ENCODE measurements at regions of chr12 and their contacts with region 1.

Region 1: GRCh38 chr12:10562306-10562933 is 51.0 kb downstream of the MAGOHB start:
- DNase-seq: peak in 7 of 35 experiments; percentile 7 to 76 (median 24)
- ATAC-seq: no peak
- H3K4me3 ChIP-seq: no peak overlapping the region
- H3K4me3 Mint-ChIP-seq: no peak overlapping the region
- H3K27ac ChIP-seq: no peak overlapping the region
- H3K27ac Mint-ChIP-seq: peak overlapping the region in 1 of 2 donors; percentile 52
- H3K4me1 ChIP-seq: peaks cover 8 to 16% of the 10 kb centered on the region in 2 experiments
- H3K4me1 Mint-ChIP-seq: peaks cover 21 to 28% (median 24%) of the 10 kb centered on the region in 3 donors
- H3K27me3 ChIP-seq: no peaks in the 10 kb centered on the region
- H3K27me3 Mint-ChIP-seq: peaks cover 12 to 19% of the 10 kb centered on the region in 2 donors

Region 2: GRCh38 chr12:10140001-10140400 is 422.4 kb before region 1 on chr12:
- CTCF ChIA-PET with region 1: no interaction called
- POLR2A ChIA-PET with region 1: no interaction called
- DNase-seq: peak in 32 of 35 experiments; percentile 8 to 71 (median 30)
- ATAC-seq: peak in 1 of 4 experiments; percentile 45
- H3K4me3 ChIP-seq: no peak overlapping the region
- H3K4me3 Mint-ChIP-seq: no peak overlapping the region
- H3K27ac ChIP-seq: no peak overlapping the region
- H3K27ac Mint-ChIP-seq: no peak overlapping the region
- H3K4me1 ChIP-seq: no peaks in the 10 kb centered on the region
- H3K4me1 Mint-ChIP-seq: no peaks in the 10 kb centered on the region
- H3K27me3 ChIP-seq: peaks cover 0 to 3% of the 10 kb centered on the region in 2 experiments
- H3K27me3 Mint-ChIP-seq: peaks cover 0 to 8% of the 10 kb centered on the region in 2 donors

Region 3: GRCh38 chr12:10235761-10236631 is 326.4 kb before region 1 on chr12:
- CTCF ChIA-PET with region 1: interaction called, 11 to 12 read pairs
- POLR2A ChIA-PET with region 1: no interaction called
- DNase-seq: peak in 27 of 35 experiments; percentile 18 to 80 (median 39)
- ATAC-seq: peak in 1 of 4 experiments; percentile 73
- H3K4me3 ChIP-seq: no peak overlapping the region
- H3K4me3 Mint-ChIP-seq: no peak overlapping the region
- H3K27ac ChIP-seq: no peak overlapping the region
- H3K27ac Mint-ChIP-seq: peak overlapping the region in 1 of 2 donors; percentile 36
- H3K4me1 ChIP-seq: peaks cover 0 to 13% of the 10 kb centered on the region in 2 experiments
- H3K4me1 Mint-ChIP-seq: peaks cover 0 to 10% (median 4%) of the 10 kb centered on the region in 3 donors
- H3K27me3 ChIP-seq: no peaks in the 10 kb centered on the region
- H3K27me3 Mint-ChIP-seq: no peaks in the 10 kb centered on the region

Region 4: GRCh38 chr12:10365696-10366405 is 196.6 kb before region 1 on chr12:
- CTCF ChIA-PET with region 1: interaction called, 4 to 10 read pairs
- POLR2A ChIA-PET with region 1: no interaction called
- DNase-seq: no peak
- ATAC-seq: no peak
- H3K4me3 ChIP-seq: peak overlapping the region; percentile 57 to 63
- H3K4me3 Mint-ChIP-seq: no peak overlapping the region
- H3K27ac ChIP-seq: peak overlapping the region; percentile 78
- H3K27ac Mint-ChIP-seq: no peak overlapping the region
- H3K4me1 ChIP-seq: peaks cover 22 to 45% of the 10 kb centered on the region in 2 experiments
- H3K4me1 Mint-ChIP-seq: peaks cover 35 to 51% (median 39%) of the 10 kb centered on the region in 3 donors
- H3K27me3 ChIP-seq: no peaks in the 10 kb centered on the region
- H3K27me3 Mint-ChIP-seq: no peaks in the 10 kb centered on the region

Region 5: DNA sequence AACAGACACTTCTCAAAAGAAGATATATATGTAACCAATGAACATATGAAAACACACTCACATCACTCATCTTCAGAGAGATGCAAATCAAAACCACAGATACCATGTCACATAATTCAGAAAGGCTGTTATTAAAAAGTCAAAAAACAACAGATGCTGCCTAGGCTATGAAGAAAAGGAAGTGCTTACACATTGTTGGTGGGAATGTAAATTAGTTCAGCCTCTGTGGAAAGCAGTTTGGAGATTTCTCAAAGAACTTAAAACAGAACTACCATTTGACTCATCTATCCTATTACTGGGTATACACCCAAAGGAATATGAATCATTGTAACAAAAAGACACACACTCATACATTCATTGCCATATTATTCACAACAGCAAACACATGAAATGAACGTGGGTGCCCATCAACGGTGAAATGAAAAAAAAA is 21.6 kb before region 1 on chr12:
- CTCF ChIA-PET with region 1: no interaction called
- POLR2A ChIA-PET with region 1: no interaction called
- DNase-seq: no peak
- ATAC-seq: peak in 3 of 4 experiments; percentile 32 to 49 (median 42)
- H3K4me3 ChIP-seq: no peak overlapping the region
- H3K4me3 Mint-ChIP-seq: no peak overlapping the region
- H3K27ac ChIP-seq: no peak overlapping the region
- H3K27ac Mint-ChIP-seq: peak overlapping the region in 1 of 2 donors; percentile 49
- H3K4me1 ChIP-seq: no peaks in the 10 kb centered on the region
- H3K4me1 Mint-ChIP-seq: peaks cover 0 to 12% (median 9%) of the 10 kb centered on the region in 3 donors
- H3K27me3 ChIP-seq: no peaks in the 10 kb centered on the region
- H3K27me3 Mint-ChIP-seq: no peaks in the 10 kb centered on the region

Region 6: DNA sequence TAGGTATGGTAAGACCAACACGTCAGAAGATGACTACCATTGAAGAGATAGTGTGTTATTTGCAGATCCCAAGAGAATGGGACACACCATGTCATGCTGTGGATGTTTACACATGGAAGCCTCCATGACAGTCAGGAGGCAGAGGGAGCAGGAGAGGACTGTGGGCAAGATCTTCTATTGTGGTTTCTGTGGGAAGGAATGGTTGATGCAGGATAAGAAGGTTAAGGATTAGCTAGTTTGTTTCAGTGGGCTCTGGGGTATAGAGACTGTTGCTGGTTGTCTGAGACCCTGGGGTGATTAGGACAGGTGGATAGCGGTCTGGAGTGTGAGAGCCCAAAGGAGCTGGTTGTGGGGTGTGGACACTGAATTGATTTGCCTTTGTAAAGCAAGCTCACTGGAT is 216.7 kb after region 1 on chr12:
- CTCF ChIA-PET with region 1: no interaction called
- POLR2A ChIA-PET with region 1: no interaction called
- DNase-seq: no peak
- ATAC-seq: no peak
- H3K4me3 ChIP-seq: no peak overlapping the region
- H3K4me3 Mint-ChIP-seq: no peak overlapping the region
- H3K27ac ChIP-seq: no peak overlapping the region
- H3K27ac Mint-ChIP-seq: no peak overlapping the region
- H3K4me1 ChIP-seq: no peaks in the 10 kb centered on the region
- H3K4me1 Mint-ChIP-seq: no peaks in the 10 kb centered on the region
- H3K27me3 ChIP-seq: peaks cover 0 to 8% of the 10 kb centered on the region in 2 experiments
- H3K27me3 Mint-ChIP-seq: peaks cover 8 to 9% of the 10 kb centered on the region in 2 donors